Activated CD4-positive, alpha-beta T cell treated with anti-CD3 and anti-CD28 coated beads, Interleukin-2, amount 10 ng/mL, durations not matched to agents 24 days and 14 days (primary cell): ENCODE measurements at regions of chr1 and their contacts with region 1.

Region 1: DNA sequence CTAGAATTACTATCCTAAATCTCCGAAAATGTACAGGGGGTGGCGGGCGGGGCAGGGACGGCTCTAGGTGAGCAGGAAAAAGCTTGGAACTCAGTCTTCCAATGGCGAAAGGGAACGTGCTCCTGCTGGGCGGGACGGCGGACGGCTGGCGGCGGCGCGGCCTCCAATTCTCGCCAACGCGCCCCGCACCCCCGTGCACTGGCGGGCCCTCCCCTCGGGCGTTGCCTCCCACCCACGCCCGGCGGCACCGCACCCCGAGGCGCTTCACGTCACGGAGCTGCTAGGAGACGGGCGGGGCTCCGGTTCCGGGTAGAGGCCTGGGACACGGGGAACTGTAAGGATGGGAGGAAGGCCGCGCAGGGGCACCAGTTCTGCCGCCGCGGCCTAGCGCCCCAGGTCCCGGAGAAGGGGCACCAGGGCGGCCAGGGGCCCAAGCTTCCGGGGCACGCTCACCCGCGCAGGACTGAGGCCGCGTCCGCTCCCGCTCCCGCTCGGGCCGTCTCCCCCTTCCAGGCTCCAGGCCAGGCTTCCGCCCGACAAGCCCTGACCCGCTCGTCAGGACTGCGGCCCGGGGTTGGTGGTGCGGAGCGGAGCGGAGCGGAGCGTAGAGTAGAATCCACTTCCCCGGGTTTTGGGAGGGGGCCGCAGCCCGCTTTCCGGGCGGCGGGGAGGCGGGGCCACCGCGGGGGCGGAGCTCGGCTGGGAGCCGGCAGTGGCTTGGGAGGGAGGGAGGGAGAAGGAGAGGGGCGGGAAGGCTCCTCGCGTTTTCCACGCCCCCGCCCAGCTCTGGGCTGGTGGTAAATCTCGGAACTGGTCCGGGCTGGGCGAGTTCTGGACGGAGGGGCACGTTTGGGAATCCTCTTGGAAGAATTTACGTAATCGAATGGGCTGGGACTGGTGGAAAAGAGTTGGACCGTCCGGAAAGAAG is at the start of gene DDX59:
- DNase-seq: peak; percentile 97
- H3K4me3 Mint-ChIP-seq: peak within 1 kb of the TSS; percentile 97
- H3K27ac Mint-ChIP-seq: peak within 1 kb of the TSS; percentile 97
- H3K4me1 Mint-ChIP-seq: peaks cover 33% of the 10 kb centered on the region
- H3K27me3 Mint-ChIP-seq: no peaks in the 10 kb centered on the region
- total RNA-seq, gene DDX59: 14.0 and 14.3 TPM in 2 replicates

Region 2: DNA sequence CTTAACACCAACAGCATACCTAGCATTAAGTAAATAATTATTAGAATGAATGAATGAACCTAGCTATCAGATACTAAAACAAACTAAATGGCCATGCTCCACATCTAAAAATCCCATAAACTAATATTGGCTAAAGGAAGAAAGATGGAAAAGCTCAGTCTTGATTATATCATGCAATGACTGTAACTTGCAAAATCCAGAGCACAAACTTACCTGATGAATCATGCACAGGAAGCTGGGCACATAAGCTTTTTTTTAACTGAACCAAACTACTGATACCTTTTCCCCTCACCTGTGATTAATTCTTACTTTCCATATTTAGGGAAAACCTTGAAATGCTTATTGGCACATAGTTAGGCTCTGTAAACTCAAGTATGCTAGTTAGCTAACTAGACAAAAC is 119.2 kb before region 1 on chr1:
- intact Hi-C with region 1: no loop called
- DNase-seq: no peak
- H3K4me3 Mint-ChIP-seq: no peak overlapping the region
- H3K27ac Mint-ChIP-seq: no peak overlapping the region
- H3K4me1 Mint-ChIP-seq: peaks cover 8% of the 10 kb centered on the region
- H3K27me3 Mint-ChIP-seq: peaks cover 6% of the 10 kb centered on the region

Region 3: GRCh38 chr1:200620273-200621131 is 49.1 kb before region 1 on chr1 and contains the start of gene KIF14:
- intact Hi-C with region 1: loop called (anchors 1 kb)
- DNase-seq: peak; percentile 99
- H3K4me3 Mint-ChIP-seq: peak within 1 kb of the TSS; percentile 95
- H3K27ac Mint-ChIP-seq: peak within 1 kb of the TSS; percentile 95
- H3K4me1 Mint-ChIP-seq: peaks cover 47% of the 10 kb centered on the region
- H3K27me3 Mint-ChIP-seq: no peaks in the 10 kb centered on the region
- total RNA-seq, gene KIF14: 11.5 and 11.6 TPM in 2 replicates

Region 4: DNA sequence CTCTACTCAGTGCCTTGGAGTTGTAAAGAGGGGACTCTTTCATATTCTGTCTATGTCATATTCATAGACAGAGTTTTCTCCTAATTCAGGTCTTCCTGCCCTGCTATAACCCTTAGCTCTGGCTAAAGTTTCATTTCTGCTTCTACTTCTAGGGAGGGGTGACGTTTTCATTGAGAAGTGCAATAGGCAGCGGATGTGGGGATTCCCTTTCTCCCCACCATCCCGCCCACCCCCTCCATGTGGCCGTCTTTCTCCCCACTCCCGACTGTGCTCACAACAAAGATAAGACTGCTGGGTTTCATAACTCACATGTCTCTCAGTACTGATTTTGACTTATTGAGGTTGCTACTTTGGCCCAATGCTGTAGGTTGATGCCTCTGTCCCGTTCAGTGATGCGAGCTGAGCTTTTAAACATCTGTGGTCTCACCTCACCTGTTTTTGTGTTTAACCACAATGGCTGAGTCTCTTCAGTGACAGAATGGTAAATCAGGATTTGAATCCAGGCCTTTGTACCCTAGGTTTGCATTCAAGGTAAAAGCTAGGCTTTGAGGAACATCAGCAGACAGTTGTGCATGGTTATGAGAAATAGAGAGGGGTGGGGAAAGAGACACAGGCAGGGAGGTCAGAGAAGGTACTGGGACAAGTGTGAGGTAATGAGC is 41.2 kb before region 1 on chr1:
- intact Hi-C with region 1: loop called (anchors 1 kb)
- DNase-seq: peak; percentile 69
- H3K4me3 Mint-ChIP-seq: peak overlapping the region; percentile 58
- H3K27ac Mint-ChIP-seq: peak overlapping the region; percentile 62
- H3K4me1 Mint-ChIP-seq: peaks cover 34% of the 10 kb centered on the region
- H3K27me3 Mint-ChIP-seq: peaks cover 8% of the 10 kb centered on the region

Region 5: GRCh38 chr1:200653022-200653462 is 16.5 kb before region 1 on chr1:
- intact Hi-C with region 1: loop called (anchors 1 kb)
- DNase-seq: no peak
- H3K4me3 Mint-ChIP-seq: peak overlapping the region; percentile 24
- H3K27ac Mint-ChIP-seq: peak overlapping the region; percentile 46
- H3K4me1 Mint-ChIP-seq: peaks cover 26% of the 10 kb centered on the region
- H3K27me3 Mint-ChIP-seq: no peaks in the 10 kb centered on the region

Region 6: DNA sequence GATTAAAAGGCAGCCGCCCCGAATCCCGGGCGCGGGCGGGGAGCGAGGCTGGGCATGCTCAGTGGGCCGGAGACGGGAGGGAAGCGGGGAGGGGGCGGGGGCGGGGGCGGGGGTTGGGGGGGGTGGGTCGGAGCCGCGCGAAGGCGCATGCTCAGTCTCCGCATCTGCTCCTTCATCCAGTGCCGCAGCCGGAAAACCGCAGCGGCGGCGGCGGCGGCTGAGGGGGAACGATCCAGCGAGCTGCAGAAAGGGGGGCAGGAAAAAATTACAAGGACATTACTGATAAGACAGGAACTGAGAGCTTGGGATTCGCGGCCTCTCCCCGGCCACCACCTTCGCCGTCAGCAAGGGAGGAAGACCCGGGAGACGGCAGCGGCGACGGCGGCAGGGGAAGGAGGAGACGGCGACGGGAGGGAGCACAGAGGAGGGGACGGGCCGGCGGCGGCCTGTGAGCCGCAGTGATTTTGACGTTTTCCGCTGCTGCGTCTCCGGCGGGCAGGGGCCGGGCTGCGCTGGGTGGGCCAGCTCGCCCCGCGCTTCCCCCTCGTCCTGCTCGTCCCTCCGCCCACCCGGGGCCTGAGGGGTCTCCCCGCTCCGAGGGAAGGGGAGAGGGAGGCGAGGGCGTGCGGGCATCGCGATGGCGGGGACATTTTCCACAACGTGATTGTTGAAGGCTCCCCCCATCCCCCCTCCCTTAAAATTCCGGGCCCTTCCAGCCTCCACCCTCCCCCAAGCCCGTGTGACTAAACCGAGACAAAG is 69.3 kb after region 1 on chr1 and contains the start of gene CAMSAP2:
- intact Hi-C with region 1: loop called (anchors 1 kb)
- DNase-seq: peak; percentile 89
- H3K4me3 Mint-ChIP-seq: peak within 1 kb of the TSS; percentile 94
- H3K27ac Mint-ChIP-seq: peak within 1 kb of the TSS; percentile 87
- H3K4me1 Mint-ChIP-seq: peaks cover 21% of the 10 kb centered on the region
- H3K27me3 Mint-ChIP-seq: peaks cover 38% of the 10 kb centered on the region
- total RNA-seq, gene CAMSAP2: 1.4 and 2.5 TPM in 2 replicates

Region 7: GRCh38 chr1:201023517-201023902 is 353.9 kb after region 1 on chr1 and contains the start of gene KIF21B:
- intact Hi-C with region 1: loop called (anchors 5 kb)
- DNase-seq: peak; percentile 98
- H3K4me3 Mint-ChIP-seq: peak within 1 kb of the TSS; percentile 90
- H3K27ac Mint-ChIP-seq: peak within 1 kb of the TSS; percentile 97
- H3K4me1 Mint-ChIP-seq: peaks cover 70% of the 10 kb centered on the region
- H3K27me3 Mint-ChIP-seq: no peaks in the 10 kb centered on the region
- total RNA-seq, gene KIF21B: 48.3 and 49.3 TPM in 2 replicates